B cell (primary cell): ENCODE measurements at regions of chr4 and their contacts with region 1.

Region 1: DNA sequence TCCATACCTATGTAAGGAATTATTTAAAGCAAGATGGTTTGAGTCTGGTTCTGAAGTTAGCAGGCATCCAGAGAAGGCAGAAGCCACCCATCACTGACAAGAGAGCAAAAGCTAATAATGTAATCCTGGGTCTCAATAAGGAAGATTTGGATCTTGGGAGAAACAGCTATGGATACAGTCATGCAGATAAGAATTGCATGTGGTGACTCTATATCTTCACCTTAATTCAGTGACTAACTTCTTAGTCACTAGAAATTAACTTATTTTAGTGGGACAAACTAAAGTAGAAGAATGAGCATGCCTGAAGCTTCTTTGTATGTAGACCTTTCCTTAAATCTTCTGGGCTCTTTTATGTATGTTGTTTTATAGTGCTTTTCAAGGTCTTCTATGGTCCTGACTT is 66.6 kb downstream of the ATP10D start:
- DNase-seq: no peak
- ATAC-seq: no peak
- H3K4me3 ChIP-seq: no peak overlapping the region
- H3K4me3 Mint-ChIP-seq: no peak overlapping the region
- H3K27ac ChIP-seq: no peak overlapping the region
- H3K27ac Mint-ChIP-seq: no peak overlapping the region
- H3K4me1 ChIP-seq: no peaks in the 10 kb centered on the region
- H3K4me1 Mint-ChIP-seq: no peaks in the 10 kb centered on the region
- H3K27me3 ChIP-seq: no peaks in the 10 kb centered on the region
- H3K27me3 Mint-ChIP-seq: no peaks in the 10 kb centered on the region
- CTCF ChIP-seq: no peak

Region 2: DNA sequence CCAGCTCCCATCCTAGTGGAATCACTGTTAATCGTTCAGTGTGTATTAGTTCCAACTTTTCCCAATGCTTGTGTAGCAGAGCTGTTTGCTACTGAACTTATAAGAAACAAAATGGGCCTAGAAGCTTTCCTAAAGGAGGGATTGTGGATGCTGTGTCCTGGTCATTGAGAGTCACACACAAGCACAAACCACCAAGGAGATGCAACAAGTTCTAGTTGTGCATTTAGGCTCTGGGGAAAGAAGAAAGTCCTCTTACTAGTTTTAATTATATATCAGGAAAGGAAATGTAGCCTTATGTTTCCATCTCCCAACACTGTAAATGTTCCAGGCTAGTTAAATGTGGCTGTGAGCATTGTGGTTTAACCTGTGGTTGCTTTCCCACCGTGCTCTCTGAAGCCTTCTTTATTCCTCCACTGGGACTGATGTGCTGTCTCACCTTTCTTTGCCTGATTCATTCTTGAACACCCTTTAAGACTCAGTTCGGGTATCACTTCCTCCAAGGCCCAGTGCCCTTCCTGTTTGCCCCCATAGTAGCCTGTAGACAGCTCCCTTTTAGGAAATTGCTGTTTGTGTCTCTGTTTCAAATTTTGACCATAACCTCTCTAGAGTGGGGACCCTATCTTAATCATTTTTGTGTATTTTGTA is 32.3 kb before region 1 on chr4:
- CTCF ChIA-PET with region 1: no interaction called
- POLR2A ChIA-PET with region 1: no interaction called
- intact Hi-C with region 1: loop called (anchors 5 kb)
- DNase-seq: peak; percentile 59
- ATAC-seq: peak; percentile 92
- H3K4me3 ChIP-seq: no peak overlapping the region
- H3K4me3 Mint-ChIP-seq: peak overlapping the region; percentile 4
- H3K27ac ChIP-seq: peak overlapping the region in 1 of 2 donors; percentile 2
- H3K27ac Mint-ChIP-seq: peak overlapping the region; percentile 77
- H3K4me1 ChIP-seq: peaks cover 12 to 16% of the 10 kb centered on the region in 2 donors
- H3K4me1 Mint-ChIP-seq: peaks cover 25% of the 10 kb centered on the region
- H3K27me3 ChIP-seq: no peaks in the 10 kb centered on the region
- H3K27me3 Mint-ChIP-seq: no peaks in the 10 kb centered on the region
- CTCF ChIP-seq: no peak